Aorta (tissue), 5 donors: ENCODE measurements at regions of chr9 and their contacts with region 1.

Region 1: GRCh38 chr9:130860458-130861316 is 25.6 kb downstream of the ABL1 start:
- DNase-seq: peak; percentile 92 to 94
- ATAC-seq: peak; percentile 92
- H3K4me3 ChIP-seq: no peak overlapping the region
- H3K27ac ChIP-seq: peak overlapping the region; percentile 4 to 83
- H3K4me1 ChIP-seq: peaks cover 0 to 1% of the 10 kb centered on the region in 2 donors
- H3K27me3 ChIP-seq: no peaks in the 10 kb centered on the region

Region 2: GRCh38 chr9:130707225-130707976 is 153.3 kb before region 1 on chr9:
- intact Hi-C with region 1: loop called (anchors 5 kb)
- DNase-seq: peak; percentile 71 to 83
- ATAC-seq: no peak
- H3K4me3 ChIP-seq: no peak overlapping the region
- H3K27ac ChIP-seq: no peak overlapping the region
- H3K4me1 ChIP-seq: no peaks in the 10 kb centered on the region
- H3K27me3 ChIP-seq: no peaks in the 10 kb centered on the region

Region 3: DNA sequence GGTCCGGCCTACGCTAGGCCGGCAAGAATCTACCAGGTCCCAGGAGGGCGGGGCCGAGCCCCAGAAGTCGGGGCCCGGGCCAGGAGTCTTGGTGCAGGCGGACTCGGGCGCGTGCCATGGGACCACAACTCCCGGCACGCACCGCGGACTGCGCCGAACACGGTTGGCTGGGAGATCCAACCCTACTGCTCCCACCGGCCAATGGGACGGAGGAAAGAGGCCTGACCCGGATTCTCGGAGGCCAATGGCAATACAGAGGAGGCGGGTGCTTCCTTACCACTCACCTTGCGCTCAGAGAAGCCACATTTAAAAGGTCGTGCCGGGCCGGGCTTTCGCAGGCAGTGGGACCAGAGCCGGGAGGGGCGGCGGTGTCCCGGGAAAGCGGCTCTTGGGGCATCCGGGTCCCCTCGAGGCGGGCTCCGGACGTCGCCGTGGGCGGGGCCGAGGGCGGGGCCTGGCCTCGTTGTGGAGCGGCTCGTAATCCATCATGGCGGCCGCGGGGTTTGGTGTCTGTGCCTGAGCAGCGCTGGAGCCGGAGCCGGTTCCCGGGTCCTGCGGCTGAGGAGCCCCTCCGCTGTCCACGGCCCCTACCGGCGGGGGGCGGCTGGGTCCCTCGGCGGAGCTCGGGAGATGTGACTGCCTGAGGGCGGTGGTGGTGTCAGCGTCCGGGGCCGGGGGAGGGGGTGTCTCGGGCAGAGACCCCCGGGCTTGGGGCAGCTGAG is 148.0 kb before region 1 on chr9:
- intact Hi-C with region 1: loop called (anchors 5 kb)
- DNase-seq: peak; percentile 99
- ATAC-seq: peak; percentile 98
- H3K4me3 ChIP-seq: peak overlapping the region; percentile 36 to 83
- H3K27ac ChIP-seq: peak overlapping the region in 1 of 2 donors; percentile 78
- H3K4me1 ChIP-seq: peaks cover 0 to 3% of the 10 kb centered on the region in 2 donors
- H3K27me3 ChIP-seq: no peaks in the 10 kb centered on the region

Region 4: GRCh38 chr9:130770679-130771442 is 89.8 kb before region 1 on chr9:
- intact Hi-C with region 1: loop called (anchors 2 kb)
- DNase-seq: no peak
- ATAC-seq: peak; percentile 83
- H3K4me3 ChIP-seq: no peak overlapping the region
- H3K27ac ChIP-seq: no peak overlapping the region
- H3K4me1 ChIP-seq: no peaks in the 10 kb centered on the region
- H3K27me3 ChIP-seq: no peaks in the 10 kb centered on the region